HCT116 (cell line): ENCODE measurements at regions of chr11 and their contacts with region 1.

Region 1: DNA sequence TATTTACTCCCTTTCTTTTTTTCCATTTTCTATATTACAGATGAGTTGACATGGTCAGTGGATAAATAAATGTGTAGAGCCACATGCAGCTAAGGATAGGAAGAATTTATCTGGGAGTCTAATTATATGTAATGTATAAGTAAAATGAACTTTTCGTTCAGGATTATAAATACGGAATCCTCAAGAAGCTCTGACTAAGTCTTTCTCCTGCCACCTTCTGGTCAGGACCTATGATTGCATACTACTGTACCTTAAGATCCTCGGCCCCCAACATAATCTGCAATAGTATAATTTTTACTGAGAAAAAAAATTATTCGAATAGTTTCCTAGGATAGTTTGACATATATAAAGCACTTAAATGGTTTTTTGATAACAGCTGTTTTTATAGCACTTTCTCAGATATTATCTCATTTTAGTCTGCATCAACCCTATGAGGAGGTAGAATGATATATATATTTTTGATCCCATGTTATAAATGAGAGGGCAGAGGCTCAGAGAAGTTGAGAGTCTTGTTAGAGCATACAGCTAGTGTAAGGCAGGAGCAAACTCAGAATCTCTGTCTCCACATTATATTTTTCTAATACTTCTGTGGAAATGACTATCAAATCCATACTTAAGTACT is 36.1 kb downstream of the CCDC90B start:
- DNase-seq: peak; percentile 21
- ATAC-seq: peak; percentile 86
- H3K4me3 ChIP-seq: no peak overlapping the region
- H3K27ac ChIP-seq: no peak overlapping the region
- H3K4me1 ChIP-seq: no peaks in the 10 kb centered on the region
- H3K27me3 ChIP-seq: no peaks in the 10 kb centered on the region
- CTCF ChIP-seq: peak; percentile 62 to 66 (median 64)
- POLR2A ChIP-seq: no peak
- RAD21 ChIP-seq: peak; percentile 66

Region 2: DNA sequence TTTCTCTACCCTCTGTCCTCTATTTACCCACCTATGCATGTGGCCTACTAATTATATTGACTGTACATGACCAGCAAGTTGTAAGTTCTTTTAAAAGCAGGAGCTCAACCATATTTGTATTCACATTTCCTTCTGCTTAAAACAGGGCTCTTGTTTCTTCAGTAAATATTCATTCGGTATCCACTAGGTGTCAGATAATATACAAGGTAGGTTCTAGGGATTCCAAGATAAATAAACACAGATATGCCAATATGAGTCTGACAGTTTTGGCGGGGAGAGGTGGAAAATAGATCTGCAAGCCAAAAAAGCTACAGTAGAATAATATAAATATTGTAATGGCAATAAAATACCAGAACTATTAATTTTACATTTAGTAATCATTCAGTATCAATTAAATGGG is 163.0 kb before region 1 on chr11:
- CTCF ChIA-PET with region 1: interaction called, 3 read pairs
- POLR2A ChIA-PET with region 1: no interaction called
- RAD21 ChIA-PET with region 1: no interaction called
- intact Hi-C with region 1: loop called (anchors 5 kb)
- DNase-seq: no peak
- ATAC-seq: peak; percentile 64
- H3K4me3 ChIP-seq: no peak overlapping the region
- H3K27ac ChIP-seq: no peak overlapping the region
- H3K4me1 ChIP-seq: peaks cover 2 to 5% of the 10 kb centered on the region in 2 experiments; a peak in 3 of 4 replicates
- H3K27me3 ChIP-seq: no peaks in the 10 kb centered on the region
- CTCF ChIP-seq: peak; percentile 11 to 42 (median 35); a peak in 3 of 6 replicates
- POLR2A ChIP-seq: no peak
- RAD21 ChIP-seq: peak; percentile 67

Region 3: DNA sequence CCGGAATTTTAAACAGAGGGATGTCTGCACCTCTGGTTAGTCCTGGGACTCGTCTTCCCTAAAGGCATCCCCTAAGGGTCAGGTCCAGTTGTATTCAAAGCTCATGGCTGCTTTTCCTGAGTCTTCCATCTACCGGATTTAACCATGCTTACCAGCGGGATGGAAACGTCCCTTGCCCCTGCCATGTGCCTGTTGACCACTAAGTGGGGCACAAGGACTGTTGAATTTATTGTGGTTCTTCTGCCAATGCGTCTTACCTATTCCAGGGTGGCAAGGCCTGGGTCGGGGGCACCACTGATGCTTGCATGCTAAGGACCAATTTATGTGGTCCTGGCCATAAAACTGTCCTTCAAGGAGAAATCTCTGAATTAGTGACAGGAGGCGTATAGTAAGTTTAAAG is 31.0 kb before region 1 on chr11:
- CTCF ChIA-PET with region 1: no interaction called
- POLR2A ChIA-PET with region 1: no interaction called
- RAD21 ChIA-PET with region 1: no interaction called
- intact Hi-C with region 1: no loop called
- DNase-seq: no peak
- ATAC-seq: peak; percentile 58
- H3K4me3 ChIP-seq: no peak overlapping the region
- H3K27ac ChIP-seq: no peak overlapping the region
- H3K4me1 ChIP-seq: no peaks in the 10 kb centered on the region
- H3K27me3 ChIP-seq: no peaks in the 10 kb centered on the region; the same call in 1 of the 2 replicates
- CTCF ChIP-seq: peak in 2 of 3 experiments; percentile 36 to 38; a peak in 4 of 6 replicates
- POLR2A ChIP-seq: no peak
- RAD21 ChIP-seq: no peak; the same call in 1 of the 2 replicates